ENCODE measurements at regions of chr1 and their contacts with region 1.

Region 1: DNA sequence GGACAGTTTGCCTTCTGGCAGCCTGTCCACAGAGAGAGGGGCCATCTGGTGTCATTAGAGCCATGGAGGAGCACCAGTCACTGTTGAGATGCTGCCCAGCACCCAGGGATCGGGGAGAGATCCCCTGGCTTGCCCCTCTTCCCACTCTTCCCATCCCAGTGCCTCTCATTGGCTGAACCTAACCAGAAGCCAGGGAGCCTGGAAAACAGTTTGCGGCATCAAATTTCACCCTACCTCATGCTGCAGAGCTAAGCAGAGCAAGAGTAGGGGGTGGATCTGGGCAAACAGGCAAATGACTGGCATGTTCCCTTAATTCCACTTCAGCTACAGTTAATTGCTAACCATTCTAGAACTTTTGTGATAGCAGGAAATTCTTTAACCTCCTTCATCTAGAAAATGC is 19.1 kb downstream of the TRAF5 start:
- DNase-seq: no peak
- H3K4me3 ChIP-seq: no peak overlapping the region
- H3K27ac ChIP-seq: no peak overlapping the region
- H3K4me1 ChIP-seq: peaks cover 4% of the 10 kb centered on the region
- CTCF ChIP-seq: no peak

Region 2: DNA sequence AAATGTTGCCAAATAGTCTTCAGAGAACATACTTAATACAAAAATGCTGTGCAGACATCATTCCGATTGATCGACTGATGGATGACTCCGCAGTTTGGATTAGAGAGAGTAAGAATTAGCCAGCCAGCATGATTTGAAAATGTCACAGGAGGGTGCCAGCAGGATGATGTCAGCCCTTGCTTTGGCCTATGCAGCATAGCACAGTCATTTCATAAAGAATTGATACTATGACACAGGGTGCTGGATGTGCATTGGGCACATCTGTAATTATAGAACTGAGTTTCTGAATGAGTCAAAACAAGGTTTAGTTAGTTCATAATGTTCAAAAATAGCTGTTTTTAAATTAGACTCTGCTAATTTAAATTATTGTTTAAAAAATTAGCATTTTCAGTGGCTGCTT is 40.7 kb before region 1 on chr1:
- CTCF ChIA-PET with region 1: no interaction called
- POLR2A ChIA-PET with region 1: no interaction called
- intact Hi-C with region 1: no loop called
- DNase-seq: no peak
- H3K4me3 ChIP-seq: no peak overlapping the region
- H3K27ac ChIP-seq: no peak overlapping the region
- H3K4me1 ChIP-seq: no peaks in the 10 kb centered on the region
- CTCF ChIP-seq: no peak

Region 3: GRCh38 chr1:211329764-211330201 is 15.9 kb before region 1 on chr1:
- CTCF ChIA-PET with region 1: interaction called, 4 read pairs
- POLR2A ChIA-PET with region 1: interaction called, 13 read pairs
- intact Hi-C with region 1: no loop called
- DNase-seq: peak; percentile 83
- H3K4me3 ChIP-seq: peak overlapping the region; percentile 89
- H3K27ac ChIP-seq: peak overlapping the region; percentile 77
- H3K4me1 ChIP-seq: peaks cover 80% of the 10 kb centered on the region
- CTCF ChIP-seq: no peak

Region 4: GRCh38 chr1:211335522-211336157 is 10.1 kb before region 1 on chr1:
- CTCF ChIA-PET with region 1: no interaction called
- POLR2A ChIA-PET with region 1: interaction called, 26 read pairs
- intact Hi-C with region 1: no loop called
- DNase-seq: peak; percentile 84
- H3K4me3 ChIP-seq: peak overlapping the region; percentile 56
- H3K27ac ChIP-seq: peak overlapping the region; percentile 87
- H3K4me1 ChIP-seq: peaks cover 90% of the 10 kb centered on the region
- CTCF ChIP-seq: no peak

Measured in OCI-LY7 (cell line).